ENCODE measurements at regions of chr9 and their contacts with region 1.

Region 1: DNA sequence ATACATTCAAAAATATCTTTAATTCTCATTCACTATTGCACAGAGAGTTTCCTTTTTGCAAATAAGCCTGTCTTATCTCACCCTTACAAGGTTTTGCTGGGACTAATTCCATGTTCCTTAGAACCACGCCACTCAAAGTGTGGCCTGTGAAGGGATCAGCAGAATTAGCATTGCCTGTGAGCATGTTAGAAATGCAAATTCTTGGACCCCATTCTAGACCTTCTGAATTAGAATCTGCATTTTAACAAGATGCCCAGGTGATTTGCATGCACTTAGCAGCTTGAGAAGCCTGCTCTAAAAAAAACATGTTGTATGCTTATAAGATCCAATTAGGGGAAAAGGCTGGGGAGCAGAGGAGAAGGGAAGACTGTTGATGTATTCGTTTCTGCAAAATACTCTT is 460.0 kb downstream of the NTRK2 start:
- DNase-seq: no peak
- H3K4me3 ChIP-seq: no peak overlapping the region
- H3K27ac ChIP-seq: no peak overlapping the region
- H3K27me3 ChIP-seq: no peaks in the 10 kb centered on the region
- CTCF ChIP-seq: no peak

Region 2: DNA sequence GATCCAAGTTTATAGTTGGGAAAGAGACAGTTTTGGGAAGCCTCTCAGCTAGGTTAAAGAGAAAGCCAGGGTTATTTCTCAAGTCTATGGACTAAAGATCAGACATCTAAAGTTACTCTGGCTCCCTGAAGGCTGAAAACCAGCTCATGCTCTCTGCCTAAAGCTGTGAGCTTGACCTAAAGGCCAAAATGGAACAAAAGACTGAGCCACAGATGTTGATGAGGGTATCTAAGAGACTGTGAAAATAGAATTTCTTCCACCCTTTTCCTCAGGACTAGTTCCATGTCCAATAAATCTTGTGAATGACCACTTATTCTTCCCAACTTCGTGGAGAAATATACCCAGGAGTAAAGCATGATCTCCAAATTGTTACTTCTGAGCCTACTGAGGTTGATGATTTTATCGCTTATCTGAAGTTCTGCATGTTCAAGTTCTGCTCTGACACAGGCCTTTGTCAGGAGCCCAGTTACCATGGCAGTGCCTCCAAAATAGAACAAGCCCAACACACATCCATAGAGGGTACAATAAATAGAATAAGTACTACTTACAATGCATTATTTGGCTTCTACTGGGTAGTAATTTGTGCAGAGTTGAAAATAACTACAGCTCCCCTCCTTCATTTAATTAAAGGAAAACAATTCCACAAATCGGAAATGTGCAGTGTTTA is 86.4 kb before region 1 on chr9:
- intact Hi-C with region 1: no loop called
- DNase-seq: peak in 2 of 10 donors; percentile 42 to 58
- H3K4me3 ChIP-seq: no peak overlapping the region
- H3K27ac ChIP-seq: peak overlapping the region in 58 of 59 donors; percentile 30 to 100 (median 98)
- H3K27me3 ChIP-seq: no peaks in the 10 kb centered on the region
- CTCF ChIP-seq: no peak

Region 3: GRCh38 chr9:85483208-85483607 is 353.7 kb after region 1 on chr9:
- intact Hi-C with region 1: loop called in 1 of 2 experiments (anchors 10 kb)
- DNase-seq: no peak
- H3K4me3 ChIP-seq: no peak overlapping the region
- H3K27ac ChIP-seq: no peak overlapping the region
- H3K27me3 ChIP-seq: no peaks in the 10 kb centered on the region
- CTCF ChIP-seq: peak in 24 of 56 donors; percentile 7 to 47 (median 24)

Measured in dorsolateral prefrontal cortex (tissue), 120 donors.